ENCODE measurements at regions of chr22 and their contacts with region 1.

Region 1: GRCh38 chr22:24555157-24556039 is at the start of gene SNRPD3:
- DNase-seq: peak; percentile 99
- ATAC-seq: peak; percentile 80
- H3K4me3 ChIP-seq: peak within 1 kb of the TSS; percentile 64 to 99 (median 94)
- H3K4me3 Mint-ChIP-seq: peak within 1 kb of the TSS; percentile 99
- H3K27ac ChIP-seq: peak within 1 kb of the TSS; percentile 87 to 96
- H3K27ac Mint-ChIP-seq: peak within 1 kb of the TSS; percentile 98
- H3K4me1 ChIP-seq: peaks cover 64 to 73% of the 10 kb centered on the region in 2 donors
- H3K4me1 Mint-ChIP-seq: peaks cover 80% of the 10 kb centered on the region
- H3K27me3 ChIP-seq: no peaks in the 10 kb centered on the region
- H3K27me3 Mint-ChIP-seq: no peaks in the 10 kb centered on the region
- CTCF ChIP-seq: no peak
- total RNA-seq, gene SNRPD3: 76.7 and 79.0 TPM in 2 replicates

Region 2: GRCh38 chr22:23069502-23070357 is 1485.7 kb before region 1 on chr22:
- CTCF ChIA-PET with region 1: no interaction called
- POLR2A ChIA-PET with region 1: no interaction called
- intact Hi-C with region 1: loop called (anchors 5 kb)
- DNase-seq: peak; percentile 94
- ATAC-seq: peak; percentile 97
- H3K4me3 ChIP-seq: peak overlapping the region; percentile 9 to 73 (median 47)
- H3K4me3 Mint-ChIP-seq: peak overlapping the region; percentile 94
- H3K27ac ChIP-seq: no peak overlapping the region
- H3K27ac Mint-ChIP-seq: peak overlapping the region; percentile 87
- H3K4me1 ChIP-seq: peaks cover 12 to 38% of the 10 kb centered on the region in 2 donors
- H3K4me1 Mint-ChIP-seq: peaks cover 40% of the 10 kb centered on the region
- H3K27me3 ChIP-seq: peaks cover 0 to 3% (median 0%) of the 10 kb centered on the region in 4 experiments
- H3K27me3 Mint-ChIP-seq: no peaks in the 10 kb centered on the region
- CTCF ChIP-seq: no peak

Region 3: DNA sequence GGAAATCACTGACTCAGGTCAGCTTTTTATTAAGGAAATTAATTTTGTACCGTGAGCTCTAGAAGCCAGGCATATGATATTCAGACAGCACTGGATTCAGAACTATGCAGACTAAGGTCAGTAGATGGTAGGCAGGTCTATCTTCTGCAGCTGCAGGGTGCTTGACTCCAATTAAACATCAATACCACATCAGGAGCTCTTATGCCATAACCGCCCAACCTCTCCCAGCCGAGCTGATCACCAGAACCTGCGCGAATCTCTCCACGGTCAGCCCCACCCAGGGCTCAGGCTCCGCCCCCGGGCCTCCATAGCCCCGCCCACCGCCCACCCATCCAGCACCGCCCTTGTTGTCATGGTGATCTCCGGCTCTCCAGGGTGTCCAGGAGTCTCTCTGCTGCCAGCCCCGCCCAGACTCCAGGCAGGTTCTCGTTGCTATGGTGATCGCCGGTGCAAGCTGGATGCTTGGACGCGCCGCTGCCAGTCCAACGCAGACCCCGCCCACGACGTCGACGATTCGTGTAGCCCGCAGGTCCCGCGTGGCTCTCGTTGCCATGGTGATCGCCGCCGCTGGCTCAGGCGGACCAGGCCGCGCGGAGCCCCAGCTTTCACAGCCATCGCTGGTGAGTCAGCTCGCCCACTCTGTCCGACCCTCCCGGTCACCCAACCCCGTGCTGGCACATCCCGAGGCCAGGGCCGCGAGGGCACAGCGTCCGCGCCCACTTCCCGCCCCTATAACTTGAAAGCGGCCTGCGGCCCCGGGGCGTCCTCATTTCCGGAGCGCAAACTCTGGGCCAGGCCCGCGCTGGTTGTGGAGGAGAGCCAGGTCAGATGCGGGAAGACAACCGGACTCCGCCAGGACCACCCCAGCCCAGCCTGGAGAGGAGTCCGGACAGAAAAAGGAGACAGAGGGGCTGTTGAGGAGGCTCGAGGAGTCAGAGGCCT is 1410.2 kb before region 1 on chr22 and contains the start of gene RAB36:
- CTCF ChIA-PET with region 1: no interaction called
- POLR2A ChIA-PET with region 1: no interaction called
- intact Hi-C with region 1: loop called (anchors 10 kb)
- DNase-seq: peak; percentile 99
- ATAC-seq: peak; percentile 60
- H3K4me3 ChIP-seq: peak within 1 kb of the TSS; percentile 16 to 52 (median 43)
- H3K4me3 Mint-ChIP-seq: peak within 1 kb of the TSS; percentile 89
- H3K27ac ChIP-seq: peak within 1 kb of the TSS; percentile 65 to 83
- H3K27ac Mint-ChIP-seq: peak within 1 kb of the TSS; percentile 96
- H3K4me1 ChIP-seq: peaks cover 41 to 58% of the 10 kb centered on the region in 2 donors
- H3K4me1 Mint-ChIP-seq: peaks cover 44% of the 10 kb centered on the region
- H3K27me3 ChIP-seq: no peaks in the 10 kb centered on the region
- H3K27me3 Mint-ChIP-seq: no peaks in the 10 kb centered on the region
- CTCF ChIP-seq: no peak
- total RNA-seq, gene RAB36: 1.9 and 3.3 TPM in 2 replicates

Region 4: GRCh38 chr22:23800297-23801237 is 754.8 kb before region 1 on chr22:
- CTCF ChIA-PET with region 1: no interaction called
- POLR2A ChIA-PET with region 1: no interaction called
- intact Hi-C with region 1: loop called (anchors 10 kb)
- DNase-seq: peak; percentile 89
- ATAC-seq: peak; percentile 70
- H3K4me3 ChIP-seq: peak overlapping the region in 4 of 5 experiments; percentile 0 to 44 (median 4)
- H3K4me3 Mint-ChIP-seq: peak overlapping the region; percentile 81
- H3K27ac ChIP-seq: peak overlapping the region; percentile 92 to 93
- H3K27ac Mint-ChIP-seq: peak overlapping the region; percentile 96
- H3K4me1 ChIP-seq: peaks cover 63 to 76% of the 10 kb centered on the region in 2 donors
- H3K4me1 Mint-ChIP-seq: peaks cover 70% of the 10 kb centered on the region
- H3K27me3 ChIP-seq: no peaks in the 10 kb centered on the region
- H3K27me3 Mint-ChIP-seq: no peaks in the 10 kb centered on the region
- CTCF ChIP-seq: no peak

Region 5: DNA sequence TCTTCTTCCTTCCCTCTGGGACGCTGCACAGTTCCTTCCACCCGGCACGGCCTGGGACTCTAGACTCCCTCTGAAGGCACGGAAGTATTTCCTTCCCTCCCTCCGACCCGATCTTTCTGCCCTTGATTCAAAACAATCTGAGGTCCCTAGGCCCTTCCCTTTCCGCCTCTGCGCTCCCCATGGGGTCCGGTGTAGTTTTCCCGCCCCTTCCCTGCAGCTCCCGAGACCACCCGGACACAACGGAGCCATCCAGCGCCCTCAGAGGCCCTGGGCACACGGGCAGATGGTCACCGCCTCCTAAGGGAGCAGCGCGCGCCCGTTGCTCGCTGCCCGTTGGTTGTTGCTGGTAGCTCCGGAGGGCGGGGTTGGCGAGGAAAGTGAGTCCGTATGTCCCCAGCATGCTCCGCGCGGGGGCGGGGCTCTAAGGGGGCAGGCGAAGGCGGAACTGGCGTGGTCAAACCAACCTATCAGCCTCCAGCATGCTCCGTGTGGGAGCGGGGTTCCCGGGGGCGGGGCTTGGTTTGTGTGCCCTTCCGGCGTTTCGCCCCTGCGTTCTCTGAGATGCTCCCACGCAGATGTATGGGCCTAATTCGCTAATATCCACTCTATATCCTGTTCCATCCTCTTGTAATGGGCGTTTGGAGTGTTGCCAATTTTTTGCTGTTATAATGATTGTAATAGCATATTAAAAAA is 641.6 kb before region 1 on chr22:
- CTCF ChIA-PET with region 1: no interaction called
- POLR2A ChIA-PET with region 1: no interaction called
- intact Hi-C with region 1: loop called (anchors 5 kb)
- DNase-seq: peak; percentile 98
- ATAC-seq: peak; percentile 99
- H3K4me3 ChIP-seq: peak overlapping the region; percentile 52 to 96 (median 68)
- H3K4me3 Mint-ChIP-seq: peak overlapping the region; percentile 98
- H3K27ac ChIP-seq: peak overlapping the region; percentile 68 to 92
- H3K27ac Mint-ChIP-seq: peak overlapping the region; percentile 98
- H3K4me1 ChIP-seq: peaks cover 21 to 24% of the 10 kb centered on the region in 2 donors
- H3K4me1 Mint-ChIP-seq: peaks cover 31% of the 10 kb centered on the region
- H3K27me3 ChIP-seq: no peaks in the 10 kb centered on the region
- H3K27me3 Mint-ChIP-seq: no peaks in the 10 kb centered on the region
- CTCF ChIP-seq: no peak

Region 6: DNA sequence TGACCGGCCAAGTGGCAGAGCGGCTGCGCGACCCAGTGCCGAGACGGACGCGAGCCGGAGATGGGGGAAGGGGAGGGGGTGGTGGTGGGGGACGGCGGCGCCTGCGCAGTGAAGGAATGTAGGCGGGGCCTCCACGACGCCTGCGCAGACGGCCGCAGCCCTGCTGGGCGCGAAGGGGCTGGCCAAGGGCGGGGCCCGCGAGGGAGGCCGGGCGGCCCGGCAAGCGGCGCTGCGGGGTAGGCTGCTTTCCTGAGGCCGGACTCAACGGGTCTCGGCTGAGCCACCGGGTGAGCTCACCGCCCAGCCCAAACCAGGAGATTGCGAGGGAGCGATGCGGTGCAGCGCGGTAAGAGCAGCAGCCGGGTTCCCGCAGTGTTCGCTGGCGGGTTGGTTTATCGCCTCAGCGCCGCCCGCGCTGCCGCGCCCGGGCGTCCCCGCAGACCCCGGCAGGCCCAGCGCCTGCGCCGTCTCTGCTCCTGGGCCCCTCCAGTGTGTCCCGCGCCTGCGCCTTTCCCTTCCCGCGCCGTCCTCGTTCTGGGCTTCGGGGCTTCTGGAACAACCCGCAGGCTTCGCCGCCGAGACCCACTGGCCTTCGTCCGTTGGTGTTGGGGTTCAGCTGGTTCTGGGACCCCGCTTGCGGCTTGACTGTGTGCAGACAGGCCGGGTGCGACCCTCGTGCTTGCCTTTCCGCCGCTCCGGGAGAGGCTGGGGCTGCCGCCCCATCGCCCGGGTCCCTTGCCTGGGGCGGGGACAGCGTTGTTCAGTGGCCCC is 284.6 kb before region 1 on chr22 and contains the start of gene SPECC1L:
- CTCF ChIA-PET with region 1: no interaction called
- POLR2A ChIA-PET with region 1: no interaction called
- intact Hi-C with region 1: loop called (anchors 1 kb)
- DNase-seq: peak; percentile 96
- ATAC-seq: peak; percentile 93
- H3K4me3 ChIP-seq: peak within 1 kb of the TSS; percentile 75 to 92 (median 78)
- H3K4me3 Mint-ChIP-seq: peak within 1 kb of the TSS; percentile 88
- H3K27ac ChIP-seq: peak within 1 kb of the TSS; percentile 76 to 84
- H3K27ac Mint-ChIP-seq: peak within 1 kb of the TSS; percentile 91
- H3K4me1 ChIP-seq: peaks cover 21 to 39% of the 10 kb centered on the region in 2 donors
- H3K4me1 Mint-ChIP-seq: peaks cover 39% of the 10 kb centered on the region
- H3K27me3 ChIP-seq: no peaks in the 10 kb centered on the region
- H3K27me3 Mint-ChIP-seq: no peaks in the 10 kb centered on the region
- CTCF ChIP-seq: no peak
- total RNA-seq, gene SPECC1L: 81.4 and 85.3 TPM in 2 replicates

Region 7: GRCh38 chr22:24338726-24339451 is 216.5 kb before region 1 on chr22:
- CTCF ChIA-PET with region 1: no interaction called
- POLR2A ChIA-PET with region 1: no interaction called
- intact Hi-C with region 1: no loop called
- DNase-seq: no peak
- ATAC-seq: no peak
- H3K4me3 ChIP-seq: no peak overlapping the region
- H3K4me3 Mint-ChIP-seq: no peak overlapping the region
- H3K27ac ChIP-seq: no peak overlapping the region
- H3K27ac Mint-ChIP-seq: no peak overlapping the region
- H3K4me1 ChIP-seq: no peaks in the 10 kb centered on the region
- H3K4me1 Mint-ChIP-seq: no peaks in the 10 kb centered on the region
- H3K27me3 ChIP-seq: no peaks in the 10 kb centered on the region
- H3K27me3 Mint-ChIP-seq: no peaks in the 10 kb centered on the region
- CTCF ChIP-seq: no peak